Left lung (tissue), 14 donors: ENCODE measurements at regions of chr9 and their contacts with region 1.

Region 1: DNA sequence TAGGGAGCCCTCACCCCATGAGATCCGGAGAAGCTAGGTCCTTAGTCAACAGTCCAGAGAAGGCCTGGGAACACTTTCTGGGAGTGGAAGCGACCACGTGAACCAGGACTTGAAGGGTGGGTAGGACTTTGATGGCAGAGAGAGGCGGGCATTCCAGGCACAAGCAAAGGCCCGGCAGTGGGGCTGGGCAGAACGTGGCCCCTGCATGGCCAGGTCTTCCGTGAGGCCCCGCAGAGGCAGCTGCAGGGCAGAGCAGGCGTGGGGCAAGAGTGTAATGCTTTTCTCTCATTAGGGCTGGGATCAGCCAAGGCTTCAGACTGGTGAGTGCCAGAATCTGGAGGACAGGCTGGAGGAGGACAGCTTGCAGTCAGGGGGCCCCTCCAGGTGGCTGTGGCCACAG is 184.1 kb downstream of the PAX5 start:
- DNase-seq: no peak
- ATAC-seq: no peak
- H3K4me3 ChIP-seq: no peak overlapping the region
- H3K27ac ChIP-seq: no peak overlapping the region
- H3K4me1 ChIP-seq: no peaks in the 10 kb centered on the region
- H3K27me3 ChIP-seq: peaks cover 0 to 20% of the 10 kb centered on the region in 2 donors
- CTCF ChIP-seq: no peak

Region 2: DNA sequence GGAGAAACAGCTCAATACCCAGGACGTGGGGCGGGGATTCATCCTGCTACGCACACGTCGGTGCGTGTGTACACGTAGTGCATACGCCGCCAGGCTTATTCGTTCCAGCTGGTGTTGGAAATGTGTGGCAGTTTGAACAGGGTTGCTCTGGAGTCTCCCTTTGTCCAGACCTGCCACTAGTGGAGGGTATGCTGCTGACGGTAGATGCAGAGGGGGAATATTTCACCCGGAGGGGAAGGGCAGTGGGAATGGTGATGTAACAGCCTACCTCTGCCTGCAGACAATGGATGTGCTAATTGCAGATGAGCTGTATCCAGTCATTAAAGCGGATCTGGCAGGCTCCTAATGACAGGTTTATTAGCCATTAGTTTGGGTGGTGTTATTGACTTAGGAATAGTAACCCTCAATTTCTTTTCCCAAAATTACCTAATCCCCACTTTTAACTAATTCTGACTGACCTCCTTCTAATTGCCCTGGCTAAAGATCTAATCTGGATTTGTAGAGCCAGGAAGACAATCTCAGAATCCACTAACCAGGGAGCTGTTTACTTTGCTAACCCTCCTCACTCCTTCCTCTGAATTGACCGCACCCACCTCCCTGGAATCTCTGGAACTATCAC is 41.5 kb after region 1 on chr9:
- intact Hi-C with region 1: no loop called
- DNase-seq: peak in 1 of 4 donors; percentile 28
- ATAC-seq: peak; percentile 50
- H3K4me3 ChIP-seq: no peak overlapping the region
- H3K27ac ChIP-seq: no peak overlapping the region
- H3K4me1 ChIP-seq: no peaks in the 10 kb centered on the region
- H3K27me3 ChIP-seq: peaks cover 0 to 19% of the 10 kb centered on the region in 2 donors
- CTCF ChIP-seq: no peak

Region 3: GRCh38 chr9:36903541-36904435 is 53.8 kb after region 1 on chr9:
- intact Hi-C with region 1: loop called in 1 of 2 experiments (anchors 5 kb)
- DNase-seq: peak in 1 of 4 donors; percentile 29
- ATAC-seq: peak; percentile 48
- H3K4me3 ChIP-seq: no peak overlapping the region
- H3K27ac ChIP-seq: no peak overlapping the region
- H3K4me1 ChIP-seq: no peaks in the 10 kb centered on the region
- H3K27me3 ChIP-seq: peaks cover 7 to 52% of the 10 kb centered on the region in 2 donors
- CTCF ChIP-seq: no peak

Region 4: GRCh38 chr9:37036776-37037502 is 187.0 kb after region 1 on chr9:
- intact Hi-C with region 1: no loop called
- DNase-seq: peak in 2 of 4 donors; percentile 52 to 85
- ATAC-seq: peak; percentile 80
- H3K4me3 ChIP-seq: peak overlapping the region; percentile 21 to 43
- H3K27ac ChIP-seq: no peak overlapping the region
- H3K4me1 ChIP-seq: peaks cover 13 to 41% of the 10 kb centered on the region in 2 donors
- H3K27me3 ChIP-seq: peaks cover 83 to 100% of the 10 kb centered on the region in 2 donors
- CTCF ChIP-seq: no peak